ENCODE measurements at regions of chr13 and their contacts with region 1.

Region 1: GRCh38 chr13:32310134-32310706 is 4.9 kb downstream of the ZAR1L start:
- DNase-seq: no peak
- ATAC-seq: peak; percentile 60 to 78 (median 71)
- H3K4me3 ChIP-seq: peak overlapping the region; percentile 44
- H3K27ac ChIP-seq: no peak overlapping the region
- H3K4me1 ChIP-seq: peaks cover 3% of the 10 kb centered on the region
- H3K27me3 ChIP-seq: no peaks in the 10 kb centered on the region
- CTCF ChIP-seq: peak; percentile 74

Region 2: DNA sequence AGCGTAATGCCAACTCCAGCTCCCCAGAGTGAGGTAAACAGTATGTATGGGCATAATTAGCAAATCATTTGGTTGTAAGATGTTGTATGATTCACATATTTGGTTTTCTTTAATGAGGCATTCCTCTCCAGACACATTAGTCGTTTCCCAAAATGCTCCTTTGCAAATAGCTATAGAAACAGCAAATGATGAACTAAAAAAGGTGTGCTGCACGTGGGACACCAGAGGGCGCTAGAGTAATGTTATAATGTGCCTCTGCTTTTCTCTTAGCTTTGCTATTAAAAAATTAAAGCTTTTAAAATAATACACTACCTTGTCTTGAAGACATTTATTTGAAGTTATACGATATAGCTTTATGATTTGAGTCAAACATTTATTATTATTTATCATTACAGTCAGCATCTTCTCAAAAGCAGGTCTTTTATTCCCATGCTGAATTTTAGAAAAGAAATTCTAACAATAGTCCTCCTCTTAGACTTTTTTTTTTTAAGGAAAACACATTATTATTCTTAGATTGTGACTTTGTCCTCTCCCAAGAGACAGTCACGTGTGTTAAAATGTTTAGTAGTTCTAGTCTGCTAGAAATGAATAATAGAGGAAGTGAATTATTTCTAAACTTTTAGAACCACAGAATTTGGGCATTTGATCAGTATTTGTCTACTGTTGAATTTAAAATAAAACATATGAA is 400.2 kb before region 1 on chr13:
- intact Hi-C with region 1: loop called (anchors 5 kb)
- DNase-seq: no peak
- ATAC-seq: peak; percentile 51 to 79 (median 56)
- H3K4me3 ChIP-seq: no peak overlapping the region
- H3K27ac ChIP-seq: no peak overlapping the region
- H3K4me1 ChIP-seq: peaks cover 12% of the 10 kb centered on the region
- H3K27me3 ChIP-seq: no peaks in the 10 kb centered on the region
- CTCF ChIP-seq: peak; percentile 93

Region 3: GRCh38 chr13:32019612-32020233 is 290.5 kb before region 1 on chr13:
- intact Hi-C with region 1: loop called (anchors 5 to 10 kb)
- DNase-seq: no peak
- ATAC-seq: peak in 3 of 4 donors; percentile 63 to 80 (median 73)
- H3K4me3 ChIP-seq: no peak overlapping the region
- H3K27ac ChIP-seq: no peak overlapping the region
- H3K4me1 ChIP-seq: peaks cover 3% of the 10 kb centered on the region
- H3K27me3 ChIP-seq: no peaks in the 10 kb centered on the region
- CTCF ChIP-seq: peak; percentile 65

Region 4: DNA sequence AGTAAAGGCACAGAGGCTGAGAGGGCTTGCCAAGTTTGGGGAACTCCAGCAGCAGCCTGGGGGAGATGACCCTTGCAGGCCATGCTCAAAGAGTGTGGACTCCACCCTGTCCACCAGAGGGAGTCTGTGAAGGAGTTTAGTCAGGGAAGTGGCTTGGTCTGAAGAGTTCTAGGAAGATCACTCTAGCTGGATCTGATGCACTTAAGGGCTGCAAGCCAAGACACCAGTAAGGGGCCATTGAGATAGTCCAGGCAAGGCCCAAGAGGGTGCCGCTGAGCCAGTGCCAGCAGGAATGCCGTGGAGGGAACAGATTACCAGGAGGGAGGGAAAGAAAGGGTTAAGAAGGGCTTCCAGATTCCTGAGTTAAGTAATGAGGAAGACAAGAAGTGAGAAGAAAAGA is 63.8 kb before region 1 on chr13:
- intact Hi-C with region 1: loop called in 1 of 2 experiments (anchors 2 kb)
- DNase-seq: peak in 1 of 2 donors; percentile 38
- ATAC-seq: peak; percentile 61 to 88 (median 84)
- H3K4me3 ChIP-seq: no peak overlapping the region
- H3K27ac ChIP-seq: no peak overlapping the region
- H3K4me1 ChIP-seq: no peaks in the 10 kb centered on the region
- H3K27me3 ChIP-seq: no peaks in the 10 kb centered on the region
- CTCF ChIP-seq: peak; percentile 66

Region 5: DNA sequence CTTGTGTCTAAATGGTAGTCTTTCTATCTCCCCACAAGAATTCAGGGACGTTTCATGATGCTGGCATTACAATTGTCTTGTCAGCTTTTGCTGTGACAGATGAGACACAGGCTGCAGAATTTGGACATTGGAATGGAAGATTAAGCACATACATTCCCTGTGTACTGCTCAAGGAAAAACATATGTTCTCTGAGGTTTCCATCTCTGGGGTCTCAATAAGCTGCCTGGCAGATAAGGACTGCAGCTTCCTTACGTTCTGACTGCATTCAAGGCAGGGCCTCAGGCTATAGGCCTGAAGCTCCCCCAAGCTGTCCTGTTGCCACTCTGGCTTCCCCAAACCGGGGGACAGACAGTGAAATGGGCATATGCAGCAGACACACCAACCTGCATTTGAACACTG is 614.7 kb after region 1 on chr13:
- intact Hi-C with region 1: no loop called
- DNase-seq: no peak
- ATAC-seq: no peak
- H3K4me3 ChIP-seq: no peak overlapping the region
- H3K27ac ChIP-seq: no peak overlapping the region
- H3K4me1 ChIP-seq: no peaks in the 10 kb centered on the region
- H3K27me3 ChIP-seq: no peaks in the 10 kb centered on the region
- CTCF ChIP-seq: no peak

Measured in psoas muscle (tissue), 8 donors.